Activated CD4-positive, alpha-beta T cell treated with anti-CD3 and anti-CD28 coated beads for 36 hours (primary cell): ENCODE measurements at regions of chr13 and their contacts with region 1.

Region 1: DNA sequence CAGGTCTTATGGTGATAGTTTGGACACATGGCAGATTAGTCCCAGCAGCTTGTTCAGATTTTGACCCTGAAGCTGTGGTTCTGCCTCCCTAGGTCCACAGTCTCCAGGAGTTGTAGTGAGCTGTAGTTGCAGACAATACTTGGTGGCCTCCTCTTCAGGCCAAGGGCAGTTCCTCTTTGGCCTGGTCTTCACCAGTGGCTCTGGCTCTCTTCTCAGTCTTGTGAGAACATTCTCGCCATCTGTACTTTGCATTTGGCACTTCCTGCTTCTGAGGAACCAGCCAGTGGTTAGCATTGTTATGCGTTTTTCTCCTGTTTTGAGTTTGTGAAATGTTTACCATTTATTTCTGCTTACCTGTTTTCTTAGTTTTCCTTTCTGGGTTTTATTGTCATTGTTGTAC is 40.7 kb downstream of the PCCA start:
- DNase-seq: no peak
- ATAC-seq: no peak
- H3K4me3 Mint-ChIP-seq: no peak overlapping the region
- H3K27ac Mint-ChIP-seq: no peak overlapping the region
- H3K4me1 Mint-ChIP-seq: peaks cover 14% of the 10 kb centered on the region
- H3K27me3 Mint-ChIP-seq: no peaks in the 10 kb centered on the region

Region 2: DNA sequence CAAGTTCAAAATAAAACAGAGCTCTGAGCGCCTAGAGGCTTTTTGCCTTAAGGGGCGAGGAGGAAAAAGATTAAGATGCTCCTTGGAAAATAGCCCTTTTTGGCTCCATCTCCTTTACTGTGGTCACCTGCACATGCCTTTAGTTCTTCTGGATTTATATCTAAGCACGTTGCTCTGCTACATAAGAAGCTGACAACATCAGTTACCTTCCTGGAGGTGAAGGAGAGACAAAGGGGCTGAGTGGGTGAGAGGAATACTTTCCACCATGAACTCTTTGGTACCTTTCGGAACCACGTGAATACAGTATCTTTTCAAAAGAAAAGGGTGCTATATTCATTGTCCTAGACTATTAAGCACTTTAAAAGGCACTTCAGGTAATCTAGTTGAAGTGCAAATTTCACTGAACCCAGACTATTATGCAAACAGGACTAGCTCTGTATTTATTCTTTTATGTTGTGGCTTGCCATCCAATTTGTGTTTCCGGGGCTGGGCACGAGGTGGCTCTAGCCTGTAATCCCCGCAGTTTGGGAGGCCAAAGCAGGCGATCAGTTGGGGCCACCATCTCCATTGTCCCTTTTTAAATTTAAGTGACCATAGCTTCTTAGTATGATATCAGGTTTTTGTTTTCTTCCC is 426.8 kb before region 1 on chr13:
- CTCF ChIA-PET with region 1: no interaction called
- POLR2A ChIA-PET with region 1: no interaction called
- intact Hi-C with region 1: no loop called
- DNase-seq: no peak
- ATAC-seq: no peak
- H3K4me3 Mint-ChIP-seq: no peak overlapping the region
- H3K27ac Mint-ChIP-seq: no peak overlapping the region
- H3K4me1 Mint-ChIP-seq: no peaks in the 10 kb centered on the region
- H3K27me3 Mint-ChIP-seq: no peaks in the 10 kb centered on the region

Region 3: DNA sequence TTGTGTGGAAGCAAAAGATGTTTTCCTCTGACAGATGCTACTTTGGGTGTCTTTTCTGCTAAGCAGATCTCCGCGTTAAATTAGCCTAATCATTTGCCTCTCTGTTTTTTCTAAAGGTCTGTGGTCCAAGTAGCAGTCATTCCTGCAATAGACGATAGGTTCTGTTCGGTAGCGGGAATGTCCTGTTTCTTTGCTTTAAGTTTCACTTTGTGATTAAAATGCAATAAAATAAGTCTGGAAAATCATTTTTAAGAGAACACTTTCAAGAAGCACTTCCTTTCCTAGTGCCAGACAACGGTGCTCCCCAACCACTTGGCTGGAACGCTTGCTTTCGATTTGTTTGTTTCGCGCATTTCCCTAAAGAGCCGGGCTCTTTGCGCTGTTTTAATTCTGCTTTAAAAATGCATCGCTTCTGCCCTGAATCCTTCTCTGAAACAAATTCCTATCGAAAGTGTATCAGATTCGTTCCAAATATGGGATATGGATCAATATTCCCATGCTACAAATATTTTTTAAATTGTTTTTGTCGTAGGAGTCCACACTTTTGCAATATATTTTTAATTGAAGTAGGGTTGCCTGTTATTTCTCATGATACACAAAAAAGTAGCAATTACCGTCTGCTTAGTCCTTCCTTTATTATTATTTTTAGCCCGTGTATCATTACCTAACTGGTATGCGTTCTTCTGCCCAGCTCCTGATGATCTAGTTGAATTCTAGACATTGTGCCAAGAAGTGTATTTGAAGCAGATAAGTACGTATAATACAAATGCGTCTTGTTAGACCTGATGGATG is 133.8 kb before region 1 on chr13:
- CTCF ChIA-PET with region 1: no interaction called
- POLR2A ChIA-PET with region 1: no interaction called
- intact Hi-C with region 1: no loop called
- DNase-seq: peak; percentile 7
- ATAC-seq: no peak
- H3K4me3 Mint-ChIP-seq: no peak overlapping the region
- H3K27ac Mint-ChIP-seq: no peak overlapping the region
- H3K4me1 Mint-ChIP-seq: peaks cover 14% of the 10 kb centered on the region
- H3K27me3 Mint-ChIP-seq: peaks cover 74% of the 10 kb centered on the region

Region 4: DNA sequence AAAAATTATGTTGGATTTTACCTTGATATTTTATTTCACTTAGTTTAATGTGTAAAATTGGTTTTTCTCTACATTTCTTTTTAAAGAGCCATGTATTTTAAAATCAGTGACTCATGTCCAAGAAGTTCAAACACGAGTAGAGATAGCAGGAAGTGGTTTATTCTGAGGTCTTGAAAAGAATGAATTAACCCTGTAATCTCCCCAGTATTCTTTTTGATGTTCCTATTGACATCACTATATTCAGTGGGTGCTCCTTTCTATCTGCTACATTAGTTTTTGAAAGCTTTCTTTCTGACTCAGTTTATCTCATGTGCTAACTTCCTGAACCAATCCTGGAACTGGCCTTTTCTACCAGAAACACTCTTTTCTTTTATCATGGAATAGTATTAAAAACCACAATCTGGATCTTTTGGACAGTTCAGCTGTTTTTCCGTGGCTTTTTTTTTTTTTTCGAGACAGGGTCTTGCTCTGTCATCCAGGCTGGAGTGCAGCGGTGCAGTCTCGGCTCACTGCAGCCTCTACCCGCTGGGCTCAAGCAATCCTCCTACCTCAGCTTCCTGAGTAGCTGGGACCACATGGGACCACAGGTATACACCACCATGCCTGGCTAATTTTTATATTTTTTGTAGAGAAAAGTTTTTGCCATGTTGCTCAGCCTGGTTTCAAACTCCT is 74.2 kb after region 1 on chr13:
- CTCF ChIA-PET with region 1: no interaction called
- POLR2A ChIA-PET with region 1: no interaction called
- intact Hi-C with region 1: loop called in 1 of 2 experiments (anchors 2 kb)
- DNase-seq: peak; percentile 24
- ATAC-seq: peak; percentile 98
- H3K4me3 Mint-ChIP-seq: no peak overlapping the region
- H3K27ac Mint-ChIP-seq: peak overlapping the region; percentile 15
- H3K4me1 Mint-ChIP-seq: peaks cover 13% of the 10 kb centered on the region
- H3K27me3 Mint-ChIP-seq: no peaks in the 10 kb centered on the region

Region 5: GRCh38 chr13:100392709-100393641 is 263.4 kb after region 1 on chr13:
- CTCF ChIA-PET with region 1: no interaction called
- POLR2A ChIA-PET with region 1: no interaction called
- intact Hi-C with region 1: loop called in 1 of 2 experiments (anchors 2 kb)
- DNase-seq: peak; percentile 85
- ATAC-seq: peak; percentile 80
- H3K4me3 Mint-ChIP-seq: no peak overlapping the region
- H3K27ac Mint-ChIP-seq: peak overlapping the region; percentile 59
- H3K4me1 Mint-ChIP-seq: peaks cover 31% of the 10 kb centered on the region
- H3K27me3 Mint-ChIP-seq: no peaks in the 10 kb centered on the region

Region 6: GRCh38 chr13:100506154-100506553 is 376.5 kb after region 1 on chr13:
- CTCF ChIA-PET with region 1: no interaction called
- POLR2A ChIA-PET with region 1: no interaction called
- intact Hi-C with region 1: loop called in 1 of 2 experiments (anchors 5 kb)
- DNase-seq: peak; percentile 63
- ATAC-seq: peak; percentile 91
- H3K4me3 Mint-ChIP-seq: peak overlapping the region; percentile 52
- H3K27ac Mint-ChIP-seq: peak overlapping the region; percentile 49
- H3K4me1 Mint-ChIP-seq: peaks cover 20% of the 10 kb centered on the region
- H3K27me3 Mint-ChIP-seq: peaks cover 15% of the 10 kb centered on the region

Region 7: DNA sequence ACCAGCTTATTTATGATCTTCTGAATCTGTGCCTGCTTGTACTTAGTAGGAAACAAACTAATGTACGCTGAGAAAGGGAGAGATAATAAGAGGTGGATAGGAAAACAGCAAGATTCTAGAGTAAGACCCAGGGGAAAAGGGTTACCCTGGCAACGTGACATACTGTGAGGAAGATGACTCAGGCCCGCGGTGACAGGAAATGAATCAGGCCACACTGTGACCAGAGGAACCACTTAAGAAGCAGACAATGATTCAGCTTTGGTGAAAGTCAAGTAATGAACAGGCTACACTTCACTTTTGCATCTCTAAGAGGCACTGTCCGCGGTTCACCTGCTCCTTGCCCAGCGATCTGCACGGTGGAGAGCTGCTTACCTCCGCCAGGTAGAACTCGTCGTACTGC is 1128.5 kb after region 1 on chr13:
- CTCF ChIA-PET with region 1: no interaction called
- POLR2A ChIA-PET with region 1: no interaction called
- intact Hi-C with region 1: loop called in 1 of 2 experiments (anchors 5 kb)
- DNase-seq: peak; percentile 83
- ATAC-seq: peak; percentile 99
- H3K4me3 Mint-ChIP-seq: no peak overlapping the region
- H3K27ac Mint-ChIP-seq: no peak overlapping the region
- H3K4me1 Mint-ChIP-seq: peaks cover 7% of the 10 kb centered on the region
- H3K27me3 Mint-ChIP-seq: peaks cover 14% of the 10 kb centered on the region